ENCODE measurements at regions of chr3 and their contacts with region 1.

Region 1: GRCh38 chr3:9503283-9503682 is 50.3 kb downstream of the LHFPL4 start:
- DNase-seq: peak; percentile 63
- ATAC-seq: peak; percentile 83
- H3K4me3 Mint-ChIP-seq: no peak overlapping the region
- H3K27ac Mint-ChIP-seq: no peak overlapping the region
- H3K4me1 Mint-ChIP-seq: peaks cover 26% of the 10 kb centered on the region
- H3K27me3 Mint-ChIP-seq: peaks cover 35% of the 10 kb centered on the region
- CTCF ChIP-seq: peak; percentile 50

Region 2: GRCh38 chr3:9224490-9224889 is 278.8 kb before region 1 on chr3:
- CTCF ChIA-PET with region 1: no interaction called
- POLR2A ChIA-PET with region 1: no interaction called
- intact Hi-C with region 1: no loop called
- DNase-seq: no peak
- ATAC-seq: no peak
- H3K4me3 Mint-ChIP-seq: no peak overlapping the region
- H3K27ac Mint-ChIP-seq: no peak overlapping the region
- H3K4me1 Mint-ChIP-seq: no peaks in the 10 kb centered on the region
- H3K27me3 Mint-ChIP-seq: peaks cover 6% of the 10 kb centered on the region
- CTCF ChIP-seq: no peak

Region 3: GRCh38 chr3:9352917-9353752 is 150.1 kb before region 1 on chr3:
- CTCF ChIA-PET with region 1: interaction called, 8 read pairs
- POLR2A ChIA-PET with region 1: no interaction called
- intact Hi-C with region 1: loop called (anchors 1 kb)
- DNase-seq: peak; percentile 19
- ATAC-seq: peak; percentile 53
- H3K4me3 Mint-ChIP-seq: no peak overlapping the region
- H3K27ac Mint-ChIP-seq: no peak overlapping the region
- H3K4me1 Mint-ChIP-seq: peaks cover 28% of the 10 kb centered on the region
- H3K27me3 Mint-ChIP-seq: no peaks in the 10 kb centered on the region
- CTCF ChIP-seq: peak; percentile 47

Region 4: DNA sequence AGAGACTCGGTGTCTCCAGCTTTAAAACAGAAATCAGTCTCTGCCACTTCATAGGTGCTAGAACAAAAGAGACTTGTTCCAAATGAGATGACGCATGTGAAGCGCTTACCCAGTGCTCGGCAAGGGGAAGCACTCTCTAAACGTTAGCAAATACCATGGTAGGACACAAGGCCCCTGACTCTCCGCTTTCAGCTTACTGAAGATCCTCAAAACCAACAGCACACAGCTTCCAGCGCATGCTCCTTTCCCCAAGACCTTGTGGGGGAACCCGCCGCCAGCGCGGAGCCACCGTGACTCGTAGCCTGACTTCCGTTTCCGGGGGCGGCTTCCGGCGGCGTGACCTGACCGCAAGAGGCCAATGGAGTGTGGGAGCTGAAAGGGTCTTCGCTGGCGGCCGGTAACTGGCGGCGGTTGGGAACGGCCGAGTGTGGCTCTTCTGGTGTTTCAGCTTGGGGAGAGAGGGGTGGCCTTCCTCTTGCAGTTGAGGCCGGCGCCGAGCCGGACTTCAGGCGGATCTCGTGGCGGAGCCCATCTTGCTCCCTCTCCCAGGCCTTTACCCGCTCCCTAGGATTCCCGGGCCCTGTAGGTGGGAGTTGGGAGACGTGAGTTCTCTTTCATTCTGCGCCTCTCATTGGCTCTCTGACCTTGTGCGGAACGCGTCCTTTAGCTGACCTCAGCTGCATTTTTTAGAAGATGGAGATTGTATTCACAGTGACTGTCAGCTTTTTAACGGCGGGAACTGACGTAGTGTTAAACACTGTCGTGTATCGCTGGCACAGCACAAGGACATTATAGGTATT is 140.4 kb before region 1 on chr3 and contains the start of gene THUMPD3:
- CTCF ChIA-PET with region 1: interaction called, 3 read pairs
- POLR2A ChIA-PET with region 1: interaction called, 12 read pairs
- intact Hi-C with region 1: no loop called
- DNase-seq: peak; percentile 92
- ATAC-seq: peak; percentile 96
- H3K4me3 Mint-ChIP-seq: peak within 1 kb of the TSS; percentile 99
- H3K27ac Mint-ChIP-seq: peak within 1 kb of the TSS; percentile 98
- H3K4me1 Mint-ChIP-seq: peaks cover 16% of the 10 kb centered on the region
- H3K27me3 Mint-ChIP-seq: no peaks in the 10 kb centered on the region
- CTCF ChIP-seq: no peak
- total RNA-seq, gene THUMPD3: 34.3 and 42.0 TPM in 2 replicates

Region 5: DNA sequence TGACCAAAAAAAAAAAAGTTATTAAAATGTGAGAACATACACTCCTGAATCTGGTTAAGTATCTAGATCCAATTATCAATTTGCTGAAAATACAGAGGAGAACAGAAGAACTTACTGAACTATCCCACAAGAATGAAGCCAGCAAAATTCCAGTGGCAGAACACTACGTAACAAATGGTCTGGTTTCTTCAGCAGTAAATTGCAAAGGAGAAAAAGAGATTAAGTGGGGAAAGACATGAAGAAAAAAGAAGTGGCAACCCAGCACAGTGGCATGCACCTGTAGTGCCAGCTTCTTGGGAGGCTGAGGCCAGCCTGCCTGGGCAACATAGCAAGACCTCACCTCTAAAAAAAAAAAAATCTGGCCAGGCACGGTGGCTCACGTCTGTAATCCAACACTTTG is 11.8 kb before region 1 on chr3:
- CTCF ChIA-PET with region 1: interaction called, 13 read pairs
- POLR2A ChIA-PET with region 1: no interaction called
- intact Hi-C with region 1: no loop called
- DNase-seq: no peak
- ATAC-seq: no peak
- H3K4me3 Mint-ChIP-seq: no peak overlapping the region
- H3K27ac Mint-ChIP-seq: no peak overlapping the region
- H3K4me1 Mint-ChIP-seq: no peaks in the 10 kb centered on the region
- H3K27me3 Mint-ChIP-seq: no peaks in the 10 kb centered on the region
- CTCF ChIP-seq: no peak

Region 6: GRCh38 chr3:9649791-9650521 is 146.7 kb after region 1 on chr3:
- CTCF ChIA-PET with region 1: no interaction called
- POLR2A ChIA-PET with region 1: interaction called, 6 read pairs
- intact Hi-C with region 1: loop called (anchors 5 kb)
- DNase-seq: peak; percentile 25
- ATAC-seq: peak; percentile 59
- H3K4me3 Mint-ChIP-seq: peak overlapping the region; percentile 94
- H3K27ac Mint-ChIP-seq: peak overlapping the region; percentile 84
- H3K4me1 Mint-ChIP-seq: peaks cover 54% of the 10 kb centered on the region
- H3K27me3 Mint-ChIP-seq: no peaks in the 10 kb centered on the region
- CTCF ChIP-seq: no peak

Region 7: DNA sequence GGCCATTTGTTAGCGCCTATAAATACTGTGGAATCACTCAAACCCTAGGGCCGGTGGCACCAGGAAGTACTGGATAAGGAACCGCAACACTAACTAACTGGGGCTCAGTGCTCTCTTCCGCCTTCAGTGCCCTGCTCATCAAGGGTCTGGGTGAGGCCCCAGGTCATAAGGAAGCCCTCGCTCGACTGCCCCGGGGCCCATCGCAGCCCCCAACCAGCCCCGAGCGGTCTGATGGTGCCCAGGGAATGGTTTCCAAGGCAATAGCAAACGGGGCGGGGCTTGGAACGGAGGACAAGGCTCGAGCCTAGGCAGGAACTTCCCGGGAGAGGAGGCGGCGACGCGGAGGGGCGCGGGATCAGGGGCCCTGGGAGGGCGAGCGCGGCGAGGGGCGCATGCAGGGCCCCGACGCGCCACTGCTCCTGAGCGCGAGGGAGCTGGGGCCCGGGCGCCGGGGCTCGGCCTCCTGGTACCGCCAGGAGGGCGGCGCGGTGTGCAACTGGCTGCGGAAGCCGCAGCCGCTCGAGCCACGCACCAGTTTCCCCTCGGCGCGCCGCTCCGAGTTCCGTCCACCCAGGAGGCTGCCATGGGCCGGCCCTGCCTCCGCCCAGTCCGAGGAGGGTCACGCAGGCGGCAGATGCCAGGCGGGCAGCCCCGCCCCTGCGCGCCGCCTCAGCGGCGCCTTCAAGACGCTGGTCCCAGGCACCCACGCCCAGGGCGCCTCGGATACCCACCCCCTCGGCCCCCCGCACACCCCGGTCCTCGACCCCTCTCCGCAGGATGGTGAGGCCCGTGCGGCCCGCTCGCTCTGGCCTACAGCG is 306.5 kb after region 1 on chr3 and contains the start of gene TTLL3:
- CTCF ChIA-PET with region 1: interaction called, 4 read pairs
- POLR2A ChIA-PET with region 1: no interaction called
- intact Hi-C with region 1: loop called (anchors 5 kb)
- DNase-seq: peak; percentile 55
- ATAC-seq: peak; percentile 69
- H3K4me3 Mint-ChIP-seq: peak within 1 kb of the TSS; percentile 91
- H3K27ac Mint-ChIP-seq: peak within 1 kb of the TSS; percentile 98
- H3K4me1 Mint-ChIP-seq: peaks cover 33% of the 10 kb centered on the region
- H3K27me3 Mint-ChIP-seq: no peaks in the 10 kb centered on the region
- CTCF ChIP-seq: no peak
- total RNA-seq, gene TTLL3: 51.4 and 61.9 TPM in 2 replicates

Region 8: GRCh38 chr3:9946112-9947024 is 443.1 kb after region 1 on chr3:
- CTCF ChIA-PET with region 1: interaction called, 3 read pairs
- POLR2A ChIA-PET with region 1: no interaction called
- intact Hi-C with region 1: loop called (anchors 5 kb)
- DNase-seq: peak; percentile 75
- ATAC-seq: peak; percentile 91
- H3K4me3 Mint-ChIP-seq: peak overlapping the region; percentile 79
- H3K27ac Mint-ChIP-seq: peak overlapping the region; percentile 79
- H3K4me1 Mint-ChIP-seq: peaks cover 11% of the 10 kb centered on the region
- H3K27me3 Mint-ChIP-seq: no peaks in the 10 kb centered on the region
- CTCF ChIP-seq: no peak